Endothelial cell of umbilical vein (primary cell): ENCODE measurements at regions of chr17 and their contacts with region 1.

Region 1: GRCh38 chr17:75749545-75750389 is 15.2 kb downstream of the GALK1 start:
- DNase-seq: peak; percentile 65
- H3K4me3 ChIP-seq: no peak overlapping the region
- H3K27ac ChIP-seq: no peak overlapping the region
- H3K4me1 ChIP-seq: no peaks in the 10 kb centered on the region
- H3K27me3 ChIP-seq: no peaks in the 10 kb centered on the region
- CTCF ChIP-seq: peak; percentile 89 to 93
- POLR2A ChIP-seq: no peak

Region 2: DNA sequence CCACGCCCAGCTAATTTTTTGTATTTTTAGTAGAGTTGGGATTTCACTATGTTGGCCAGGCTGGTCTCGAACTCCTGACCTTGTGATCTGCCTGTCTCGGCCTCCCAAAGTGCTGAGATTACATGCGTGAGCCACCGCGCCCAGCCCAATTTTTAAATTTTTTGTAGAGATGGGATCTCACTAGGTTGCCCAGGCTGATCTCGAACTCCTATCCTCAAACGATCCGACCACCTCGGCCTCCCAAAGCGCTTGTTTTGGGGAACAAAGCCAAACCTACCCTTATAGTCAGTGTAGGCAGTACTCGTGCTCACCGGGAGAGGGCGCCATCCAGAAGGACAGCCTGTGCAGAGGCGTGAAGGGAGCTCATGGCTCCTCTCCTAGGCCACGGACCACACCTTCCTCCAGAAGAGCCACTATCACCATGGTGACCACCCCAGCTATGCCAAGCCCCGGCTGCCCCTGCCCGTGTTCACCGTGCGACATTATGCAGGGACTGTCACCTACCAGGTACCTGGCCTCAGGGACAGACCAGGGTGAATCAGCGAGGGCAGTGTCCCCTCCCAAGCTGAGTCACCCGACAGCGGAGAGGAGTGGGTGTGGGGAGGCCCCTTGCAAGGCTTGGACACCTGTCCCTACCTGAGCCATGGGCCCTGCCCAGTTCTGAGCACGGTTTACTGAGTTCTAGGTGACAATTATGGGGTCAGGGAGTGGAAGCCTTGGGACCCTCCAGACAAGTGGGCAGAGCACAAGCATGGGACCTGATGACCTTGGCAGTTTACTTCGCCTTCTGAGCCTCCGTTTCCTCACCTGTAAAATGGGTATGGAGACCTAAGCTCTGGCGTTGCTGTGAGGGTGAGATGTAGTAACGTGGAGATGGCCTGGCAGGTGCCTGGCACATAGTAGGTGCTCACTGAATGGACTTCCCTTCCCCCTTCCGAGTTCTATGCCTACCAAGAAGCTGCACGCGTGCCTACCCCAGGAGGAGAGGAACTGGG is 148.4 kb before region 1 on chr17:
- CTCF ChIA-PET with region 1: interaction called, 67 read pairs
- POLR2A ChIA-PET with region 1: no interaction called
- dilution Hi-C with region 1: no loop called
- intact Hi-C with region 1: no loop called
- DNase-seq: peak; percentile 30
- H3K4me3 ChIP-seq: no peak overlapping the region
- H3K27ac ChIP-seq: no peak overlapping the region
- H3K4me1 ChIP-seq: no peaks in the 10 kb centered on the region
- H3K27me3 ChIP-seq: no peaks in the 10 kb centered on the region
- CTCF ChIP-seq: peak; percentile 61 to 81
- POLR2A ChIP-seq: no peak

Region 3: GRCh38 chr17:75632863-75633485 is 116.8 kb before region 1 on chr17 and contains the start of gene SMIM5:
- CTCF ChIA-PET with region 1: interaction called, 625 read pairs
- POLR2A ChIA-PET with region 1: interaction called, 9 read pairs
- dilution Hi-C with region 1: no loop called
- intact Hi-C with region 1: loop called (anchors 1 kb)
- DNase-seq: peak; percentile 71
- H3K4me3 ChIP-seq: no peak within 1 kb of the TSS
- H3K27ac ChIP-seq: peak within 1 kb of the TSS; percentile 29
- H3K4me1 ChIP-seq: peaks cover 12% of the 10 kb centered on the region
- H3K27me3 ChIP-seq: no peaks in the 10 kb centered on the region
- CTCF ChIP-seq: peak; percentile 92 to 97
- POLR2A ChIP-seq: no peak
- total RNA-seq, gene SMIM5: not detected in 2 replicates

Region 4: DNA sequence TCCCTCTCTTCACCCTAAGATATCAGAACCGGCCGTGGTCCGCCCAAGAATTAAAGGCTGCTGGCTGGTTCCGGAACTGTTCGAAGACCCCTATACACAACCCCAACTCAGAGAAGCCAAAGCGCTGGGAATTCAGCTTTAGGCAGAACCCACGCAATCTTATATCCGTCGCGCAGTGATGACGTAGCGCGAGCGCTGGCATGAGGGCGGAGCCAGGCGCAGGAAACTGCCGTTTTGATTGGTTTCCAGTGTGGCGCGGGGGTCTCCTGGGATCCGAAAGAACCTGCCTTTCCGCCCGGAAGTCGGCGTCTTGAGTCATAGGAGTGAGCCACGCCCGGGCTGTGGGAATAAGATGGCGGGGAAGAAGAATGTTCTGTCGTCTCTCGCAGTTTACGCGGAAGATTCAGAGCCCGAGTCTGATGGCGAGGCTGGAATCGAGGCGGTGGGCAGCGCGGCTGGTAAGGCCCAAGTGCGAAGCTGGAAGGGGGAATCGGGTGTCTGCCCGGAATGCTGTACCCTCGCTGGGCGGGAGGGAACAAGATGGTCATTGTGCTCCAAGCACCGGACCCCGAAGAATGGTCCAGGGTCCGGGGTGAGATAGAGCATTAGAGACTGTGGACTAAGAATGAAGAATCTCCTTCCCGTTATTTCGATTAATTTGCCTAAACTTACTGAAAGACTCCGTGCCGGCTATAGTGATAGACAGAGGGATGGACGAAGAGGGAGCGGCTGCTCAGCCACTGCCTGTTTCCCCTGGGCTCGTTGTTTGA is 82.6 kb before region 1 on chr17 and contains the starts of genes RECQL5 and SAP30BP:
- CTCF ChIA-PET with region 1: interaction called, 653 read pairs
- POLR2A ChIA-PET with region 1: no interaction called
- dilution Hi-C with region 1: no loop called
- intact Hi-C with region 1: no loop called
- DNase-seq: peak; percentile 98
- H3K4me3 ChIP-seq: peak within 1 kb of the TSS; percentile 77 to 95 (median 81)
- H3K27ac ChIP-seq: peak within 1 kb of the TSS; percentile 86
- H3K4me1 ChIP-seq: peaks cover 20% of the 10 kb centered on the region
- H3K27me3 ChIP-seq: no peaks in the 10 kb centered on the region
- CTCF ChIP-seq: no peak
- POLR2A ChIP-seq: peak; percentile 31
- total RNA-seq, gene RECQL5: 30.7 and 30.9 TPM in 2 replicates
- total RNA-seq, gene SAP30BP: 143 and 151 TPM in 2 replicates

Region 5: GRCh38 chr17:75707131-75707571 is 42.6 kb before region 1 on chr17:
- CTCF ChIA-PET with region 1: interaction called, 34 read pairs
- POLR2A ChIA-PET with region 1: no interaction called
- dilution Hi-C with region 1: no loop called
- intact Hi-C with region 1: no loop called
- DNase-seq: peak; percentile 97
- H3K4me3 ChIP-seq: no peak overlapping the region
- H3K27ac ChIP-seq: peak overlapping the region; percentile 70
- H3K4me1 ChIP-seq: peaks cover 32% of the 10 kb centered on the region
- H3K27me3 ChIP-seq: no peaks in the 10 kb centered on the region
- CTCF ChIP-seq: no peak
- POLR2A ChIP-seq: peak; percentile 72

Region 6: GRCh38 chr17:75764711-75765421 is 15.1 kb after region 1 on chr17 and contains the start of gene GALK1:
- CTCF ChIA-PET with region 1: interaction called, 24 read pairs
- POLR2A ChIA-PET with region 1: no interaction called
- dilution Hi-C with region 1: no loop called
- intact Hi-C with region 1: no loop called
- DNase-seq: peak; percentile 66
- H3K4me3 ChIP-seq: peak within 1 kb of the TSS; percentile 44 to 62 (median 53)
- H3K27ac ChIP-seq: peak within 1 kb of the TSS; percentile 15
- H3K4me1 ChIP-seq: peaks cover 11% of the 10 kb centered on the region
- H3K27me3 ChIP-seq: no peaks in the 10 kb centered on the region
- CTCF ChIP-seq: peak in 1 of 2 donors; percentile 71
- POLR2A ChIP-seq: peak; percentile 34
- total RNA-seq, gene GALK1: 45.8 and 47.0 TPM in 2 replicates